OCI-LY7 (cell line): ENCODE measurements at regions of chr22 and their contacts with region 1.

Region 1: DNA sequence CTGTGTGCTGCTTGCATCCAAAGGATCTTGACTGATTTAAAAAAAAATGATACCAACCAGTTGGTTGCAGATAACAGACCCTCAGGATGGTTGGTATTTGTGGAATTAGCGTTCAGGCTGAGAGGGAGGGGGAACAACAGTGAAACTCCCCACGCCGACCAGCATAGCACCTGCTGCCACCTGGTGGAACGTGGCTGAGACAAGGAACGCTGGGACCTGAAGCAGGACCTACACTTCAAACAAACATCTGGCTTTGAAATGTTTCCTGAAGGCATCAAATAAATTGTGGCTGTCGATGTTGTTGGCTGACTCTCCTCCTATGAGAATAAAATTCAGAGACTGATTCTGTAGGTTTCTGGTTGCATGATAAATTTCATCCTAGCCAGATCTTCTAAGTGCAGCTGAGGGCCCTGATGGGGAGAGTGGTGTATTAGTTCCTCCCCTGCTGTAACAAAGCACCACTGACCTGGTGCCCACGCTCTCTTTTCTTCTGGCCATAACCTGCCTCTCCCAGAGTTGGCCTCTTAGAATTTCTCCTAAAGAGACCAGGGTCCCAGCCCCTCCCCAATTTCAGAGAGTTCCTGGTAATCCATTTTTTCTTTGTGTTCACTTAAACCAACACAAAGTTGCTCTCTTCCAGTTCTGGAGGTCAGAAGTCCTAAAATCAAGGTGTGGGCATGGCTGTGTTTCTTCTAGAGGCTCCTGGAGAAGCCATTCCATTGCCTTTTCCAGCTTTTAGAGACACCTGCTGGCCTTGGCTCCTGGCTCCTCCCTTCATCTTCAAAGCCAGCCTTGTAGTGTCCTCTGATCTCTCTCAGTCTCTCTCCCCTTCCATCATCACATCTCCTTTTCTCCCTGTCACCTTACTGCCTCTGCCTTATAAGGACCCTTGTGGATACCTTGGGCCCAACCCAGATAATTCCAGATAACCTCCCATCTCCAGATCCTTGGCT is 17.3 kb downstream of the APOL2 start:
- DNase-seq: peak; percentile 64
- H3K4me3 ChIP-seq: no peak overlapping the region
- H3K27ac ChIP-seq: no peak overlapping the region
- H3K4me1 ChIP-seq: no peaks in the 10 kb centered on the region
- CTCF ChIP-seq: peak; percentile 95

Region 2: GRCh38 chr22:36144886-36145541 is 77.1 kb before region 1 on chr22:
- CTCF ChIA-PET with region 1: no interaction called
- POLR2A ChIA-PET with region 1: no interaction called
- intact Hi-C with region 1: loop called (anchors 5 kb)
- DNase-seq: peak; percentile 57
- H3K4me3 ChIP-seq: no peak overlapping the region
- H3K27ac ChIP-seq: no peak overlapping the region
- H3K4me1 ChIP-seq: peaks cover 5% of the 10 kb centered on the region
- CTCF ChIP-seq: peak; percentile 87

Region 3: DNA sequence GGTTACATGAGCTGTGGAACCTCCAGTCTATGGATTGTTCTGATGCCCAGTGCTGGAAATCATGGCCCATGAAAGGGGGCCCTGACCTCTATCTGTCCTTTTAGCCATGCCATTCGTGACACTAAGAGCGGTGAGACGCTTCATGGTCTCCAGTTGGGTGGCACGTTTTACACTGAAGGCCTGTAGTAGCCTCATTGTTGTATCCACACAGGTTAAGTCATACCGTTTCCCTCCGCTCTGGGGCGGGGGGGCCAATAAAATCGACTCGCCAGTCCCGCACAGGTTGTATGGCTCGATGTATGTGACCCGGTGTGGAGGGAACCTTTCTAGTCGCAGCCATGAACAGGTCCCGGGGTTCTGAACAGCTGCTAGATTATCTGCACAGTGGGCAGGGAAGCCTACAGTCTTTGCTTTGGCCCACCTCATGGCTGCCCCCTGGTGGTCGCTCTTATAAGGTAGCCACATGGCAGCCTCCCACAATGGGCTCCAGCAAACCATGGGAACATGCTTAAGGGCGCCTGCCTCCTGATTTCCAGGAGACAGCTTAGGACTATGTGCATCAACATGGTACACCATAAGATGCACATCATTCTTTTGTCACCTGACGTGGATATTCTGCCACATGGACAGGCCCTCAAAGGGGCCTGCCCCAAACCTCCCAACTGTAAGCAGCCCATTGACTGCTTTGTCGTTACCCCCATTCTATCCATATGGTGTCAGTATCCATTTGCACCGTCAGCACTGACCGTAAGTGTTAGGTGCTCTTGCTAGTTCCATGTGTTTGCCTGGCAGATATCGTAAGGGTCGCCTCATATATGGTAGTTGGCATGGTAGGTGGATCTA is 41.8 kb before region 1 on chr22:
- CTCF ChIA-PET with region 1: no interaction called
- POLR2A ChIA-PET with region 1: no interaction called
- intact Hi-C with region 1: loop called (anchors 5 kb)
- DNase-seq: peak; percentile 73
- H3K4me3 ChIP-seq: no peak overlapping the region
- H3K27ac ChIP-seq: no peak overlapping the region
- H3K4me1 ChIP-seq: no peaks in the 10 kb centered on the region
- CTCF ChIP-seq: peak; percentile 88

Region 4: GRCh38 chr22:36194971-36195370 is 27.1 kb before region 1 on chr22:
- CTCF ChIA-PET with region 1: no interaction called
- POLR2A ChIA-PET with region 1: interaction called, 4 read pairs
- intact Hi-C with region 1: loop called (anchors 2 kb)
- DNase-seq: peak; percentile 58
- H3K4me3 ChIP-seq: no peak overlapping the region
- H3K27ac ChIP-seq: no peak overlapping the region
- H3K4me1 ChIP-seq: peaks cover 12% of the 10 kb centered on the region
- CTCF ChIP-seq: peak; percentile 85

Region 5: GRCh38 chr22:36387752-36388518 is 165.9 kb after region 1 on chr22 and contains the start of gene MYH9:
- CTCF ChIA-PET with region 1: no interaction called
- POLR2A ChIA-PET with region 1: no interaction called
- intact Hi-C with region 1: no loop called
- DNase-seq: peak; percentile 99
- H3K4me3 ChIP-seq: peak within 1 kb of the TSS; percentile 86
- H3K27ac ChIP-seq: peak within 1 kb of the TSS; percentile 93
- H3K4me1 ChIP-seq: peaks cover 45% of the 10 kb centered on the region
- CTCF ChIP-seq: no peak
- total RNA-seq, gene MYH9: 112 and 133 TPM in 2 replicates